ENCODE measurements at regions of chr6 and their contacts with region 1.

Region 1: DNA sequence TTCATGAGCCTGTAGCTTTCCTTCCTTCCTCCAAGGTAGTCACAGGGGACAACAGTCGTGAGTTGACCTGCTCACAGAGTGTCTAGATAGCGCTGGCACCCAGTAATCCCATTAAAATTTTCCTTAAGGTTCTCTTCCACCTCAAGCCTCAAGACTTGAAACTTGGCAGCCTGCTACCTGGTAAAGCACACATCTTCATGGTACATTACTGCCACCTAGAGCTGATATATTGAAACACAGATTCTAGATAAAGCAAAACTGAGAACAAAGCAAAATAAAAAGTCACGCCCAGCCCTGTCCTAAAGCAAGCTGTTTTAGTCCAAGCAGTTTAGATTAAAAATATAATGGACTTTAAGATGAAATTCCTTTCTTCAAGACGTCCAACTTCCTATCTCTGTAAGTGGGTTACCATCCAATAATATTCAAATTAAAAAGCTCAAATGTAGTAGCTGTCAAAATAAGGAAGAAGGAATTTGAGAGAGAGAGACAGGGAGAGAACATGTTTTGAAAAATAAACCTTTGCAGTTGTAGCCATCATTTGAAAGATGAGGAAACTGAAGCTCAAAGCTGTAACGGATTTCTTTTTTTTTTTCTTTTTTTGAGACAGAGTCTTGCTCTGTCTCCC is 50.7 kb upstream of the CD83 start:
- DNase-seq: peak; percentile 69 to 83 (median 74)
- ATAC-seq: peak; percentile 94
- H3K4me3 ChIP-seq: no peak overlapping the region
- H3K27ac ChIP-seq: no peak overlapping the region
- H3K4me1 ChIP-seq: no peaks in the 10 kb centered on the region
- H3K27me3 ChIP-seq: no peaks in the 10 kb centered on the region
- CTCF ChIP-seq: peak; percentile 77 to 92 (median 79)
- EP300 ChIP-seq: no peak
- POLR2A ChIP-seq: no peak
- RAD21 ChIP-seq: peak; percentile 96 to 98

Region 2: GRCh38 chr6:13795041-13795750 is 271.7 kb before region 1 on chr6:
- CTCF ChIA-PET with region 1: interaction called, 27 read pairs
- POLR2A ChIA-PET with region 1: interaction called, 3 read pairs
- in situ Hi-C with region 1: loop called (anchors 5 kb)
- intact Hi-C with region 1: loop called (anchors 1 kb)
- DNase-seq: peak; percentile 75 to 89 (median 81)
- ATAC-seq: peak; percentile 100
- H3K4me3 ChIP-seq: no peak overlapping the region
- H3K27ac ChIP-seq: no peak overlapping the region
- H3K4me1 ChIP-seq: no peaks in the 10 kb centered on the region
- H3K27me3 ChIP-seq: no peaks in the 10 kb centered on the region
- CTCF ChIP-seq: peak; percentile 85 to 96 (median 96)
- EP300 ChIP-seq: no peak
- POLR2A ChIP-seq: no peak
- RAD21 ChIP-seq: peak; percentile 87 to 92

Region 3: DNA sequence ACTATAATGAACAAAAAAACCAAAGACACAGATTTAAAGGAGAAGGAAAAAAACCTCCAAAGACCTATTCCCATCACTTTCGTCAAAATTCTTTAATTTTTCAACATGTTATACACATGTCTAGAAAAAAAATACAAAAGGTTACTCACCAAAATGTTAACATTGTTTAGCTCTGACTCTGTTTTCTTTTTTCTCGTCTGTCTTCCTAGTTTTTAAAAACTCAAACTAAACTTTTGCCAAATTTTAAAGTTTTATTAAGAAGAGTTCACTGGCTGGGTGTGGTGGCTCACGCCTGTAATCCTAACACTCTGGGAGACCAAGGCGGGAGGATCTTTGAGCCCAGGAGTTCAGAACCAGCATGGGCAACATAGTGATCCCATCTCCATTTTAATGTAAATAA is 263.3 kb before region 1 on chr6:
- CTCF ChIA-PET with region 1: no interaction called
- POLR2A ChIA-PET with region 1: no interaction called
- in situ Hi-C with region 1: loop called (anchors 5 kb)
- intact Hi-C with region 1: no loop called
- DNase-seq: no peak
- ATAC-seq: no peak
- H3K4me3 ChIP-seq: no peak overlapping the region
- H3K27ac ChIP-seq: no peak overlapping the region
- H3K4me1 ChIP-seq: peaks cover 0 to 4% of the 10 kb centered on the region in 2 experiments; a peak in 2 of 5 replicates
- H3K27me3 ChIP-seq: no peaks in the 10 kb centered on the region
- CTCF ChIP-seq: no peak
- EP300 ChIP-seq: no peak
- POLR2A ChIP-seq: no peak
- RAD21 ChIP-seq: no peak

Region 4: DNA sequence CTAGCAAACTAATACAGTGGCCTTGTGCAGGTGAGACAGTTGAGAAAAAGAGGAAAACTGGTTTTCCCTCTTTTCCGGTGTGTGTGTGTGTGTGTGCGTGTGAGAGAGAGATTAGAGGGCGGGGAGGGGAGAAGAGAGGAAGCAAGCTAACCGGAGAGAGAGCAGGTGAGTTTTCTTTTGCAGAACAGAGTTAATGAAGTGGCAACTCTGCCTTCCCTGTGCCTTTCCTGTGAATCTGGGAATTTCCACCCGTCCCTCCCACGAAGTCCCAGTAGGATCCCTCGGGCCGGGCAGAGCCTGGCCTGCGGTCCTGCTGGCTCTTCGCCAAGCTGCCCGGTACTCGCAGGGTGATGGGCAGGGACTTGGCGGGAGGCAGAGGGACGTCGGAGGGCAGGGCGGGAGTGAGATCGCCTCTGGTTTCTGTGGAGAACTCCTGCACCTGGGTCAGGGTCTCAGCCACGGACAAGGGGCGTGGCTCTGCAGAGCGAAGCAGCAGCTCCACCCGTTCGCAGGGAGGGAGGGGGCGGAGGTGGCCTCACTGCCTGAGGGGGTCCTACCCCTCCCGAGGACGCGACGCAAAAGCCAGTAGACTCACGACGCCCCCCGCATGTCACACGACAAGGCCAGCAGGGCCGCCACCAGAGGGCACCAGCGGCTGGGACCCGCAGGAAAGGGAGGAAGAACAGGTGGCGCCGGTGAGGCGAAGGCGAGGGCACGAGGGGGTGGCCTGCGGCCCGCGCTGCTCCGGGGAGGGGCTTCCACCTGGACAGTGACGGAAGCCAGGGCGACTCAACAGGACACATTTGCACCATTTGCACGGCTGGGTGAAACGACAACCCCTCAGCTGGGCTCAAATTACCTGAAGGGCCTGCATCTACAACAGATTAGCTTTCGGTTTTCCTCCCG is 193.4 kb before region 1 on chr6:
- CTCF ChIA-PET with region 1: interaction called, 11 read pairs
- POLR2A ChIA-PET with region 1: no interaction called
- in situ Hi-C with region 1: no loop called
- intact Hi-C with region 1: no loop called
- DNase-seq: peak; percentile 88 to 90 (median 89)
- ATAC-seq: peak; percentile 95
- H3K4me3 ChIP-seq: peak overlapping the region; percentile 23
- H3K27ac ChIP-seq: no peak overlapping the region; the same call in 2 of the 3 replicates
- H3K4me1 ChIP-seq: peaks cover 9 to 10% of the 10 kb centered on the region in 2 experiments; a peak in 4 of 5 replicates
- H3K27me3 ChIP-seq: no peaks in the 10 kb centered on the region
- CTCF ChIP-seq: peak; percentile 93 to 99 (median 96)
- EP300 ChIP-seq: no peak; the same call in 1 of the 2 replicates
- POLR2A ChIP-seq: 0 out of 2 replicates have a peak, but pooled peaks have one; percentile 39
- RAD21 ChIP-seq: peak; percentile 53 to 81

Measured in K562 (cell line).